ENCODE measurements at regions of chr11 and their contacts with region 1.

Region 1: DNA sequence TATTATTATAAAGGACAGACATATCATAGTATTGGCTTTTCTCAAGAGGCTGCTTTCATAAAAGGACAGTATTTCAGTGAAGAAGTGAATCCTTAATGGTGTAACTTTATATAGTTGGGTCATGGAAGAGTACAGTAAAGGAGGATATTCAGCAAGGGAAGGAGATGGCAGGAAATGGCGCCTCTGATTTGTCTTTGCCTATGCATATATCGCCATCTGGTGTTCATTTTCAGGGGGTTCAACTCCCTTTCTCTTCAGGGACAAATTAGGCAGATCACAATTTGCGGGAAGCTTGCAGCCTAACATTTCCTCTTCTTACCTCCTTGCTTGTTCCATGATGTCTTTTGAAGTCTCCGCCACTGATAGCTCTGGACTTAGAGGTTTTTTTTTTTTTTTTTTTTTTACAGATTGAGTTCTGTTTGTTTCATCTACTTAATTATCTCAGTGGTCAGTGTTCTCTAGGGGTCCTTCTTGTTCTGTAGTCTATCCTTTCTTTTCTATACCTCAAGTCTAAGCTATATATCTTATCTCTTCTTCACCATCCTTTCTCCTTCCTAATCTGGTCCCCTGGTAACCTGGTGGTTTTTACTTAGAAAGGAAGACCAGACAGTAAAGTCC is 21.8 kb upstream of the RRM1 start:
- DNase-seq: peak; percentile 60
- H3K4me3 Mint-ChIP-seq: no peak overlapping the region
- H3K27ac Mint-ChIP-seq: peak overlapping the region; percentile 0
- H3K4me1 Mint-ChIP-seq: peaks cover 35% of the 10 kb centered on the region
- H3K27me3 Mint-ChIP-seq: no peaks in the 10 kb centered on the region

Region 2: DNA sequence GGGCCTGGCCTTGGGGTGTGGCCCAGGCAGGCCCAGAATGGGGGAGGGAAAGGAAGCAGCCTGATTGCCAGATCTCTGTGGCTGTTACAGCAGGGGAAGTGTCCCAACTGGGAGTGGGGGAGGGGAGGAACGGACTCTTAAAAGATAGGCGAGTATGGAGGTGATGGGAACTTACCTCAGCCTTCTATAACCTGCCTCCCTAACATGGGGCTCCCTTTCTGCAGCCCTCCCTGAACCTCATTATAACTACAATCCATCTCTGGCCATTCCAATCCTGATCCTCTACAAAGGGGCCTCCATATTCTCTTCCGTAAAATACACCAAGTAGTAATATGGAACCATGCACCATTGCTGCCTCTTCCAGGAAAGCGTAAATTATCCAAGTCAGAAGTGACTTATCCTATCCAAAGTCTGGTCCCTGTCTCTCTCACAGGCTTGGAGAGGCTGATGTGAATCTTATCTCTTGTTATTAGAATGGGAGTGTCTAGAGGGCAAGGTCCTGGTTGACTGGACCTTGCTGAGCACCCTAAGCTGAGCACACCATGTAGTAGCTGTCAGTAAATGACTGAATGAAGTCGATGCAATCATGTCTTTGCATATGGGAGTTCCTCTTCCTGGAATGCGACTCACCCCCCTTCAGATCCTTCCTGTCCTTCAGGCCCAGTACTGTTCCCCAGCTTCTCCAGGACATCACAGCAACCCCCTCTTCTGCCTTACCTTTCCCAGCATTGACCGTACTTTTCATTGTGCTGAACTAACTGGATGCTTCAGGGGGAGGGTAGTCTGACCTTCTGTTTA is 237.9 kb before region 1 on chr11:
- CTCF ChIA-PET with region 1: interaction called, 25 read pairs
- DNase-seq: peak; percentile 33
- H3K4me3 Mint-ChIP-seq: peak overlapping the region; percentile 88
- H3K27ac Mint-ChIP-seq: peak overlapping the region; percentile 74
- H3K4me1 Mint-ChIP-seq: peaks cover 84% of the 10 kb centered on the region
- H3K27me3 Mint-ChIP-seq: no peaks in the 10 kb centered on the region

Region 3: DNA sequence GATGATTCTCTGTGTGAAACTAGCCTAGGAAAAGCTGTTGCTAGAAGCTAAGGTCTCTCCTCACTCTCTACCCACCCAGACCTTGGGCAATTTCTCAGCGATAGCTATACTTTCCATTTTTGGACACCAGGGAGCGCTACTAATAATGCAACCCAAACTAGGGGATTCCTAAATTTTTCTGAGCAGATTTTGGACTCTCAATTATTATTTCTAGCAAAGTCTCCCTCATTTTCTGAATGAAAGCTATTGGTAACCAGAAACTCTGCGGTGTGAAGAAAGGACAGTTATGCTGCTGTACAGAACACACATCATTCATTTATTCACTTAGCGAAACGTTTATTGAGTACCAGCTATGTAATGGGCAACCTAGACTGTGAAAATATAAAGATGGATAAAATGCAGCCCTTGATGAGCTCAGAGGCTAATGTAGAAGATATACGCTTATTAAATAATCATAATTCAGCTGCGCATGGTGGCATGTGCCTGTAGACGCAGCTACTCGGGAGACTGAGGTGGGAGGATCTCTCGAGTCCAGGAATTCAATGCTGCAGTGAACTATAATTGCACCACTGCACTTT is 223.4 kb before region 1 on chr11:
- CTCF ChIA-PET with region 1: interaction called, 195 read pairs
- DNase-seq: peak; percentile 51
- H3K4me3 Mint-ChIP-seq: no peak overlapping the region
- H3K27ac Mint-ChIP-seq: no peak overlapping the region
- H3K4me1 Mint-ChIP-seq: peaks cover 42% of the 10 kb centered on the region
- H3K27me3 Mint-ChIP-seq: peaks cover 4% of the 10 kb centered on the region

Region 4: DNA sequence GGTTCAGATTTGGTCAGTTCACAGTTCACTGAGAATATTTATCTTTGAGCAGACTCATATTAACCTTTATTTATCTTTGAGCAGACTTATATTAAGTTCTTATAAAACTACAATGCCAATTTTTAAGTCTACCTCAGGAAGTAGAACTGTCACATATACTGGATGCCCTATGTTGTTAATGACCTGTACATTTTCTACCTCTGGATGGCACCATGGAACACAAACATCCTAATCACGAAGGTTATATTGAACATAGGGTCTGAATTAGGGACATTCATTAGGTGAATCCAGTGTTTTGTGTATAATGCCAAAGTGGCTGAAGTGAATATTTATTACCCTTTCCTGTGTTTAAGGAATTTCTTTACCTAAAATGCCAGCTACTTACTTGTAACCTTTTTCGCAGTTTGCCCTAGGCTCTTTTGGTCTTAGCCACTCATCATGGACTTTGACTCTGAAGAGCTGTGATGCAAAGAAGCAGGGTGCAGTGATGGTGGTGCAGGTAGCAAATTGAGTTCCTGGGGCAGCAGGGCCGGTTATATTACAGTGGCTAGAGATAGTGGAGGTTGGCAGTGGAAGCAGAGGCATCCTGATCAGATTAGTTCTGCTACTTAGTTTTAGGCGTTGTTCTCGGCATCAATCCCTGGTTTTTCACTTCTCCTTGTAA is 145.5 kb before region 1 on chr11:
- CTCF ChIA-PET with region 1: interaction called, 15 read pairs
- DNase-seq: no peak
- H3K4me3 Mint-ChIP-seq: no peak overlapping the region
- H3K27ac Mint-ChIP-seq: no peak overlapping the region
- H3K4me1 Mint-ChIP-seq: peaks cover 10% of the 10 kb centered on the region
- H3K27me3 Mint-ChIP-seq: no peaks in the 10 kb centered on the region

Region 5: DNA sequence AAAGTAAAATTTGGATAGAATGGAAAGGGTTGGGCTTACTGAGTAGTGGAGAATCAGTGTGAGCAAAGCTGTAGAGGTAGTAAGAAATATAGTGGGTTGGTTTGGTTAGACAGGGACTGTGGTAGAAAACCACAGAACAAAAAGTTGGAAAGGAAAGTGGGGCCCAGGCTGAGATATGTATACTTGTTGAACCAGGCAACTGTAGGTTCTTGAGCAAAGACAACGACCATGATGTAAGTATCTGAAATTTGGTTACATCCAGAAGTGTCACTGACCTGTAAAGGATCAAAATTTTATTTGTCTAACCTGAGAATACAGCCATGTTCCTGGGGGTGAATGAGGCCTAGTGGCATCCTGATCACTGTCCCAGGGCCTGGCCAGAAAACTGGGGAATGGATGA is 103.2 kb before region 1 on chr11:
- CTCF ChIA-PET with region 1: interaction called, 11 read pairs
- DNase-seq: peak; percentile 43
- H3K4me3 Mint-ChIP-seq: no peak overlapping the region
- H3K27ac Mint-ChIP-seq: peak overlapping the region; percentile 78
- H3K4me1 Mint-ChIP-seq: peaks cover 59% of the 10 kb centered on the region
- H3K27me3 Mint-ChIP-seq: no peaks in the 10 kb centered on the region

Region 6: DNA sequence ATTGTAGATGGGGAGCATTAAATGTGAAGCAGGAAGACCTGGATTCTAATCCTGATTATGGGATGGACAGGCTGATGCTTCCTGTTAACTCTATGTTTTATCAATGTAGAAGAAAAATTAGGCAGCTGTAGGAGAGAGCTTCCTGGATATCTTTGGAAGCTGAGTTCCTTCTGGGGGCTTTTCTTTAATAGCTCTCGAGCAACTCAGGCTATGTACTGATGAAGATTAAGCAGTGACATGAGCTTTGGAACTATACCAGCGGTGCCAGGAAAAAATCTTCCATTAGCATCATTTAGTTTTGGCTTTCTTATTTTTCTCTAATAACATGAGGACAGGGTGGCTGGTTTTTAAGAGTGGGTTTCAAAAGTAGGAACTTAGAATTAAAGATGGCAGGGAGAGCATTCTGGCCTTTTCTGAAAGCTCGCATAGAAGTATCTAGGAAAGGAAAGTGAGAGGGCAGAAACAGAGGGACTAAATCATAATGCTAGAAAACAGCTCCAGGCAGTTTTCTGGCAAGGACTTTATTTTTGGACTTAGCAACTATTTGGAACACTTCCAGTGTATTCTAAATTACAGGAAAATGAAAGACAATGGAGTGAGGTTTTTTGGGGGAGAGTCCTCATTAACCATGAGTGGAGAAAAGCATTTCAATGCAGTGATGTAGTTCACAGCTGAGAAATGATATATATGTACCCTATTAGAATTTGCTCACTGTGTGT is 47.4 kb before region 1 on chr11:
- CTCF ChIA-PET with region 1: no interaction called
- DNase-seq: no peak
- H3K4me3 Mint-ChIP-seq: no peak overlapping the region
- H3K27ac Mint-ChIP-seq: peak overlapping the region; percentile 68
- H3K4me1 Mint-ChIP-seq: no peaks in the 10 kb centered on the region
- H3K27me3 Mint-ChIP-seq: no peaks in the 10 kb centered on the region

Region 7: GRCh38 chr11:4084406-4085125 is 11.8 kb after region 1 on chr11:
- CTCF ChIA-PET with region 1: interaction called, 25 read pairs
- DNase-seq: no peak
- H3K4me3 Mint-ChIP-seq: no peak overlapping the region
- H3K27ac Mint-ChIP-seq: peak overlapping the region; percentile 46
- H3K4me1 Mint-ChIP-seq: peaks cover 38% of the 10 kb centered on the region
- H3K27me3 Mint-ChIP-seq: no peaks in the 10 kb centered on the region

Region 8: GRCh38 chr11:4187055-4187988 is 114.5 kb after region 1 on chr11:
- CTCF ChIA-PET with region 1: no interaction called
- DNase-seq: peak; percentile 87
- H3K4me3 Mint-ChIP-seq: peak overlapping the region; percentile 77
- H3K27ac Mint-ChIP-seq: no peak overlapping the region
- H3K4me1 Mint-ChIP-seq: peaks cover 26% of the 10 kb centered on the region
- H3K27me3 Mint-ChIP-seq: peaks cover 19% of the 10 kb centered on the region

Measured in activated naive CD4-positive, alpha-beta T cell treated with anti-CD3 and anti-CD28 coated beads, Interleukin-2, amount 10 ng/mL, durations not matched to agents 7 days and 5 days (primary cell).